ENCODE measurements at regions of chr17 and their contacts with region 1.

Region 1: DNA sequence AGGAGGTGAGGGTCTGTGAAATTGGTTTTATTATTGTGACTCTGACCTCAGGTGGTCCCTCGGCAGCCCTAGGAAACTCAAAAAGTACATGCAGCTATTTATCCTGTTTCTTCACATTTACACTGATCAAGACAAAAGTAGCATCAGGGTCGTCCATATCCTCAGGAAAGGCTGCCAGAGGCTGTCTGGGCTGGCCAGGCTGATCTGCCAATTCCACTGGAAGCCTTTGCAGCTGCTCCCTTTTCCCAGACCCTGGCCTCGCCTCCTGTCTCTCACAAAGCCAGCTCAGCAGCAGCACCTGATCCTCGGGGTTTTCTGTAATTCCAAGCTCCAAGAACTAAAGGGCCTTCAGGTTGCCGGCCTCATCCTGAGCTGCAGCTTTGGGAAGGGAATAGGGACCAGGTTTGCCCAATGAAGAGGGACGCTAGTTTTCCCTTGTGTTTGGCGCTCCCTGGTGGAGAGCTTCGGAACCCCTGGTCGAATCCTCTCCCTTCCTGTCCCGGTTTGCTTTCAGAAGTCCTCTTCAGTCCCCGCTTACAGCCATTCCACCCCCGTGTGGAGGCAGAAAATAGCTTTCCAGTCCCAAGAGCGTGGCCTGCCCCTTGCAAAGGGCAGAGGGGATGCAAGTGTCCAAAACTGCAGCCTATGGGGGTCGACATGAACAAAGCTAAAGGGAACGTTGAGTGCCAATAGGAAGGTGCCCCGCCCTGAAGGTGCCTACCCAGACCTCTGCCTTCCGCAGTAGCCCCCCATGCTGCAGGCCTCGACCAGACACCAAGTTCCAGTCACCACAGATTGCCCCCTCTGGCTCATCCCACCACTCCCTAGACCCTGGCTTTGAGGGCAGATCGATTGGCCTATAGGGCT is 13.4 kb downstream of the MFSD6L start:
- DNase-seq: peak; percentile 71
- ATAC-seq: peak; percentile 74
- H3K4me3 ChIP-seq: no peak overlapping the region
- H3K27ac ChIP-seq: no peak overlapping the region
- H3K4me1 ChIP-seq: no peaks in the 10 kb centered on the region
- H3K27me3 ChIP-seq: 0 out of 2 replicates have a peak, but pooled peaks cover 14% of the 10 kb centered on the region
- CTCF ChIP-seq: peak; percentile 77

Region 2: GRCh38 chr17:8409966-8410864 is 375.6 kb before region 1 on chr17:
- CTCF ChIA-PET with region 1: interaction called, 10 read pairs
- POLR2A ChIA-PET with region 1: no interaction called
- intact Hi-C with region 1: no loop called
- DNase-seq: peak; percentile 84
- ATAC-seq: peak; percentile 89
- H3K4me3 ChIP-seq: peak overlapping the region; percentile 58
- H3K27ac ChIP-seq: peak overlapping the region; percentile 50
- H3K4me1 ChIP-seq: peaks cover 16% of the 10 kb centered on the region
- H3K27me3 ChIP-seq: no peaks in the 10 kb centered on the region
- CTCF ChIP-seq: peak; percentile 81

Region 3: DNA sequence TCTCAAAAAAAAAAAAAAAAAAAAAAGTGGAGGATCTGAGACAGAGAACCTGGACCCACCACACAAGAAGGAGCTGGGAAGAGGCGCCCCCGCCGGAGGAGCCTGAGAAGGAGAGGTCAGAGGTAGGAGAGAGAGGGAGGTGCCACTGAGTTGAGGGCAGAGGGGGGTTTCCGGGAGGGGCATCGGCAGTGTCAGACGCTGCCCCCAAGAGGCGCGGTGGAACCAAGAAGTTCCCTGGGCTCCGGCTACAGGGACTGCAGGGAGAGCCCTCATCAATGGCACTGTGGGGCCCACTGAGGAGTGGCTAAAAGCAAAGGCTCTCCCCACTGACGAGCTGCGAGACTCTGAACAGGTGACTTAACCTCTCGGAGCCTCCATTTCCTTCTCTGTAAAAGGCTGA is 45.3 kb before region 1 on chr17:
- CTCF ChIA-PET with region 1: no interaction called
- POLR2A ChIA-PET with region 1: no interaction called
- intact Hi-C with region 1: no loop called
- DNase-seq: no peak
- ATAC-seq: no peak
- H3K4me3 ChIP-seq: no peak overlapping the region
- H3K27ac ChIP-seq: no peak overlapping the region
- H3K4me1 ChIP-seq: no peaks in the 10 kb centered on the region
- H3K27me3 ChIP-seq: peaks cover 20% of the 10 kb centered on the region
- CTCF ChIP-seq: no peak

Region 4: DNA sequence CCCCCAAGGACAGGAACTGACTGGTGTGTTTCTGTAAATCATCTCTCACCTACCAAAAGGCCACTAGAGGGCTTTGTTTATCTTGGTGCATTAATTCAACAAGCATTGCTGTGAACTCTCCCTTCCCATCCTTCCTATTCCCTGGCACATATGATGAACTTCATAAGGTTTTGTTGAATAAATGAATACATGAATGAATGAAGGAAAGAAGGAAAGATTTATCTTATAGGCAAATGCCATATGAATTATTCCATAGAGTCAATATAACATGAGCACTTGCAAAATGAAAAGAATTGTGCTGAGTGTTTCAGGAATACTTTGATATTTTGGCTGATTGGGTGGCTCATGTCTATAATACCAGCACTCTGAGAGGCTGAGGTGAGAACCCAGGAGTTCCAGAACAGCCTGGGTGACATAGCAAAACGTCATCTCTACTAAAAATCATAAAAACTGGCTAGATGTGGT is 31.8 kb before region 1 on chr17:
- CTCF ChIA-PET with region 1: no interaction called
- POLR2A ChIA-PET with region 1: no interaction called
- intact Hi-C with region 1: loop called (anchors 1 kb)
- DNase-seq: peak; percentile 56
- ATAC-seq: peak; percentile 54
- H3K4me3 ChIP-seq: no peak overlapping the region
- H3K27ac ChIP-seq: no peak overlapping the region
- H3K4me1 ChIP-seq: no peaks in the 10 kb centered on the region
- H3K27me3 ChIP-seq: peaks cover 25% of the 10 kb centered on the region
- CTCF ChIP-seq: peak; percentile 70